ENCODE measurements at regions of chr1 and their contacts with region 1.

Region 1: DNA sequence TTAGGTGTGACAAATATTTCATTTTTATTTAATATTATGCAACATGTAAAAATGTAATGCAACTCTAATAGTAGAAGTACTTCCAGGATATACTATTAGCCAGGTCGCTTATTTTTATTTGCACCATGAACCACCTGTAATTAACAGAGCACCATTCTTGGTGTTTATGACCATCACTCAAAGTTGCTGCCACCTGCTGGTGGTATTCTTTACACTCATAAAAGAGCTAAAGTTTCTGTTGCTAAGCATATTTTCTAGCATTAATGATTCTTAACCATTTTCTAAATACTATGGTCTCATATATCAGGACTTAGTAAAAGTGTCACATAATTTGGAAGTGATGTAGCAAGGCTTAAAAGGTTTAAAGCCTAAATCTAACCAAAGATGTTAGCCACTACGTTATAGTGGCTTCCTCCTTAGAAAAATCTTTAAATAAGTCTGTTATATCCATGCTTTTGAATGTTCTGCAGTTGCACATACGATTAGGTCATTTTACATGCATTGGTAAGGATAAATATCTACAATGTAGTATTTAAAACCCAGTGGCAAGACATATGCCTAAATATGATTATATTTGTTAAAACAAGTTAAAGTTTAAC is 244.5 kb downstream of the NEGR1 start:
- DNase-seq: no peak
- H3K4me3 ChIP-seq: no peak overlapping the region
- H3K27me3 ChIP-seq: no peaks in the 10 kb centered on the region
- CTCF ChIP-seq: peak; percentile 60

Region 2: GRCh38 chr1:71586030-71586429 is 451.8 kb before region 1 on chr1:
- CTCF ChIA-PET with region 1: interaction called, 11 read pairs
- POLR2A ChIA-PET with region 1: no interaction called
- DNase-seq: no peak
- H3K4me3 ChIP-seq: no peak overlapping the region
- H3K27me3 ChIP-seq: no peaks in the 10 kb centered on the region
- CTCF ChIP-seq: no peak

Region 3: GRCh38 chr1:72023063-72023930 is 14.5 kb before region 1 on chr1:
- CTCF ChIA-PET with region 1: no interaction called
- POLR2A ChIA-PET with region 1: no interaction called
- DNase-seq: no peak
- H3K4me3 ChIP-seq: no peak overlapping the region
- H3K27me3 ChIP-seq: no peaks in the 10 kb centered on the region
- CTCF ChIP-seq: no peak

Region 4: DNA sequence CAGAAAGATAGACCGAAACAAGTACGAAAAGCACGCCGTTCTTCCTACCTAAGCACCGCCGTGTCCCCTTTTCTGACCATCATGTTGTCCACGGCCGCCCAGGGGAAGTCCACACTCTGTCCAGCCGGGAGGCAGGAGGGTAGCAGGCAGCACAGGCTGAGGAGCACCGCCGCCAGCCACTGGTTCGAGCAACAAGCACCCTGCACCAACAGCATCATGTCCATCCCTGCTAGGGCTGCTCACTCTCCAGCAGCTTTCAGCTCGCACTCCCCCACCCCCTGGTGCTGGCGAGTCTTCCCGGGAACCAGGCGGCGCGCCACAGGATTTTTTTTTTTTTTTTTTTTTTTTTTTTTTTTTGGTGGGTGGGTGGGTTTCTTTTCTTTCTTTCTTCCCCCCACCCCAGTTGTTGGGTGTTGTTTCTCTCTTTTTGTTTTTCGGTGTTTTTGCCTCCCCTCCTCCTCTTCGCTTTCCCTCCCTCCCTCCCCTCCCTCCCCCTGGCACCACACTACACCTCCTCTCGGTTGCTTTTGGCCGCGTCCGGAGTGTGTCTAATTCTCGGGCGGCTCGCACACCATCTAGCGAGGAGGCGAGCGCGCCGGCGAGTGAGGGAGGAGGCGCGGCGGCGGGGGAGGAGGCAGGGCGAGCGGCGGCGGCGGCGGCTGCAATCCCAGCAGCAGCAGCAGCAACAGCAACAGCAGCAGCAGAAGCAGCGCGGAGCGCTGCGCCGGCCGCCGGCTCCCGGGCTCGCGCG is 244.6 kb after region 1 on chr1 and contains the start of gene NEGR1:
- CTCF ChIA-PET with region 1: no interaction called
- POLR2A ChIA-PET with region 1: interaction called, 20 read pairs
- DNase-seq: peak; percentile 54
- H3K4me3 ChIP-seq: peak within 1 kb of the TSS; percentile 66
- H3K27me3 ChIP-seq: no peaks in the 10 kb centered on the region
- CTCF ChIP-seq: peak; percentile 22
- polyA plus RNA-seq, gene NEGR1: 15.4 and 30.6 TPM in 2 replicates